Activated B cell treated with CpG ODN at 0.5 μM for 24 hours (primary cell): ENCODE measurements at regions of chr1 and their contacts with region 1.

Region 1: GRCh38 chr1:84973498-84974334 is 23.2 kb downstream of the MCOLN2 start:
- DNase-seq: no peak
- ATAC-seq: peak; percentile 29
- H3K4me3 Mint-ChIP-seq: no peak overlapping the region
- H3K27ac Mint-ChIP-seq: peak overlapping the region; percentile 46
- H3K4me1 Mint-ChIP-seq: peaks cover 69% of the 10 kb centered on the region
- H3K27me3 Mint-ChIP-seq: no peaks in the 10 kb centered on the region
- CTCF ChIP-seq: no peak

Region 2: DNA sequence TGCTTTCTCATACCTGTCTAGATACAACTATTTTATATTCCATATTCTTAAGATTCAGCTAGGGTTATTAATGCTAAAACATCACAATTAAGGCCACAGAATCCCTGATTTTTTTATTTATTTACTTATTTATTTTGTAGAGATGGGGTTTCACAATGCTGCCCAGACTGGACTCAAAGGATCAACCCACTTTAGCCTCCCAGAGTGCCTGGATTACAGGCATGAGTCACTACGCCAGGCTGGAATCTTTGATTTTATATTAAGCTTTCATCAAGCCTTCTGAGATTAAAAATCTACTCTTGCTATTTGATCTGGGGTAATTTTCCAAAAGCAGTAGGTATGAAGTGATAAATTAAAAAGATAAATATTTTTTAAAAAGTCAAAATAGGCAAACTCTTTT is 15.8 kb before region 1 on chr1:
- CTCF ChIA-PET with region 1: no interaction called
- POLR2A ChIA-PET with region 1: no interaction called
- intact Hi-C with region 1: no loop called
- DNase-seq: no peak
- ATAC-seq: no peak
- H3K4me3 Mint-ChIP-seq: no peak overlapping the region
- H3K27ac Mint-ChIP-seq: no peak overlapping the region
- H3K4me1 Mint-ChIP-seq: peaks cover 4% of the 10 kb centered on the region
- H3K27me3 Mint-ChIP-seq: no peaks in the 10 kb centered on the region
- CTCF ChIP-seq: no peak

Region 3: DNA sequence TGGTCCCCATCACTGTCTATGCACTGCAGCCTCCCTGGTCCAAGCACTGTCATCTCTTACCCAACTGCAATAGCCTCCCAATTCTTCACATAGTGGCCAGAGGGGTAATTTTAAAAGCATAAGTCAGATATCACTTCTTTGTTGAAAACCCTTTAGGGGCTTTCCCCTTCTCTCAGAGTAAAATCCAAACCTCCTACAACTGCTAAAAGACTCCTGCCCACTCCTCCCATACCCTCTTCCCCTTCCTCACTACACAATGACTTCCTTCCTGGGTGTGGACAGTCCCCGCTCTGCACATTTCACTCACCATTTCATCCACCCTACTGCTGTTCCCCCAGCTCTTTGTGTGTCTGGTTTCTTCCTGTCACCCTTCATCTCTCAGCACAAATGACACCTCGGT is 14.9 kb after region 1 on chr1:
- CTCF ChIA-PET with region 1: no interaction called
- POLR2A ChIA-PET with region 1: no interaction called
- intact Hi-C with region 1: loop called (anchors 1 kb)
- DNase-seq: no peak
- ATAC-seq: peak; percentile 72
- H3K4me3 Mint-ChIP-seq: peak overlapping the region; percentile 13
- H3K27ac Mint-ChIP-seq: peak overlapping the region; percentile 46
- H3K4me1 Mint-ChIP-seq: peaks cover 67% of the 10 kb centered on the region
- H3K27me3 Mint-ChIP-seq: no peaks in the 10 kb centered on the region
- CTCF ChIP-seq: no peak

Region 4: DNA sequence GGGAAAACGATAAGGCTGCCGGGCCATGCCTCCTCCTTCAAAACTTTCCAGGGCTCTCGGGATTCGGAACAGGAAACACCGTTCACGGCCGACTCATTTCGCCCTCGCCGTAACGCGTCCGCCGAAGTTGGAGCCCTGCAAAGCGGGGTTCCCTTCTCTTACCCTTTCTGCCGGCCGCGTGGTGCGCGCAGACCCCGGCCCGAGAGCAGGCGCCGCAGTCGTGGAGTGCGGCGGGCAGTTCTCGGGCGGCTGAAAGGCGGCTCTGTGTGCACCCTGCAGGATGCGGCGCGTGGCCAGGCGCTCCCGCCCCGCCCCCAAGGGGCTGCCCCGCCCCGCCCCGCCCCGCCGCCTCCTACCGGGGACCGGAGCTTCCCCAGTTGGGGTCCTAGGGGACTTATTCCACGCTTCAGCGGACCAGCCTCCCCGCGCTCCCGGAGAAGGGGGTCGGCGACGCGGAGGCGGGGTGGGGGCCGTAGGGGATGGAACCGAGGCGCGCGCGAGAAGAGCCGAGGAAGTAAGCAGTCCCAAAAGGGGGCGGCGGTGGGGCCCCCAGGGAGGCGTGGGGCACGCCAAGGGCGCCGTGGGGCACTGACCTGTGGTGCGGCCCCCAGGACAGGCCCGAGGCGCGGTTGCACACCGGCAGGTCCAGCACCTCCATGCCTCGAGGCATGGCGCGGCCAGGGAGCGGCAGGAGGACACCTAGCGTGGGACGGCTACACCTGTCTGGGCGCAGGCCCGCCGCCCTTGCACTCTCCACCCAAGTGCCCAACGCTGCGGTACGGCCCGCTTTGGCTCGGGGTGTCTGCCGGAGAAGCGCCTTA is 23.3 kb after region 1 on chr1 and contains the start of gene MCOLN2:
- CTCF ChIA-PET with region 1: no interaction called
- POLR2A ChIA-PET with region 1: interaction called, 8 read pairs
- intact Hi-C with region 1: loop called (anchors 1 kb)
- DNase-seq: peak; percentile 60
- ATAC-seq: peak; percentile 67
- H3K4me3 Mint-ChIP-seq: peak within 1 kb of the TSS; percentile 85
- H3K27ac Mint-ChIP-seq: peak within 1 kb of the TSS; percentile 87
- H3K4me1 Mint-ChIP-seq: peaks cover 63% of the 10 kb centered on the region
- H3K27me3 Mint-ChIP-seq: peaks cover 2% of the 10 kb centered on the region
- CTCF ChIP-seq: no peak
- total RNA-seq, gene MCOLN2: 60.1 and 80.2 TPM in 2 replicates

Region 5: DNA sequence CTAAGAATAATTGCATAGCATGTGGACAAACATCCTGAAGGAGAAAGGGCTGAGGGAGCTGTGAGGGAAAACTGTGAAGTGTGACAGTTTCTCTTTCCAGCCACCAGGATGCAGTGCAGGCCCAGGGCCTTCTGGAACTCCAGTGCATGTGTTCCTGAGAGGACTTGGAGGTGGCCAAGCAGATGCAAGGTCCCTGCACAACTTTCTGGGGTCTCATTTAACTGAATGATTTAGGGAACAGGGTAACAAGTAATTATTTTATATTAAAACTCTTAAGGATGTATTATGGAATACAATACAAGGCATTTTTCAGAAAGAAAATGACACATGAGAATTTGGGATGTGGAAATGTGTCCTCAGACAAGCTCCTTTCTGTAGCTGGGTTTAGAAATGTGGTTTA is 135.8 kb after region 1 on chr1:
- CTCF ChIA-PET with region 1: no interaction called
- POLR2A ChIA-PET with region 1: no interaction called
- intact Hi-C with region 1: no loop called
- DNase-seq: no peak
- ATAC-seq: no peak
- H3K4me3 Mint-ChIP-seq: no peak overlapping the region
- H3K27ac Mint-ChIP-seq: no peak overlapping the region
- H3K4me1 Mint-ChIP-seq: no peaks in the 10 kb centered on the region
- H3K27me3 Mint-ChIP-seq: no peaks in the 10 kb centered on the region
- CTCF ChIP-seq: no peak